Activated B cell treated with CpG ODN at 0.5 μM for 24 hours (primary cell): ENCODE measurements at regions of chr9 and their contacts with region 1.

Region 1: DNA sequence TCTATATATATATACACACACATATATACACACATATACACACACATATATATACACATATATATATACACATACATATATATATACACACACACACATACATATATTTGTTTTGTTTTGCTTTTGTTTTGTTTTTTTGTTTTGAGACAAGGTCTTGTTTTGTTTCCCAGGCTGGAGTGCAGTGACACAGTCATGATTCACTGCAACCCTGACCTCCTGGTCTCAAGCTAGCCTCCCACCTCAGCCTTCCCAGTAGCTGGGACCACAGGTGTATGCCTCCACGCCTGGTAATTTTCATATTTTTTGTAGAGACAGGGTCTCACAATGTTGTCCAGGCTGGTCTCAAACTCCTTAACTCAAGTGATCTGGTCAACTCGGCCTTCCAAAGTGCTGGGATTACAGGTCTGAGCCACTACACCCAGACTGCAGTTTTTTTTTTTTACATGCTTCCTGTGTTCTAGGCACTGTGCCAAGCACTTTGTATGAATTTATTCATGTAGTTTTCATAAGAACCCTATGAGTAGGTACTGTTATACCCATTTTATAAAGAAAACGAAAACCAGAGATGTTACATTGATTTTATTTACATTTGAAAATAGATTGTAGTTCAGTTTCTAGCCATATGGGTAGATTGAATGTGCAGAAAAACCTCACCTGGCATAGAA is 120.7 kb downstream of the PBX3 start:
- DNase-seq: no peak
- ATAC-seq: no peak
- H3K4me3 Mint-ChIP-seq: no peak overlapping the region
- H3K27ac Mint-ChIP-seq: no peak overlapping the region
- H3K4me1 Mint-ChIP-seq: peaks cover 5% of the 10 kb centered on the region
- H3K27me3 Mint-ChIP-seq: no peaks in the 10 kb centered on the region
- CTCF ChIP-seq: no peak

Region 2: GRCh38 chr9:125746017-125746773 is 121.7 kb before region 1 on chr9:
- CTCF ChIA-PET with region 1: no interaction called
- POLR2A ChIA-PET with region 1: no interaction called
- intact Hi-C with region 1: no loop called
- DNase-seq: peak; percentile 94
- ATAC-seq: peak; percentile 82
- H3K4me3 Mint-ChIP-seq: peak overlapping the region; percentile 92
- H3K27ac Mint-ChIP-seq: peak overlapping the region; percentile 92
- H3K4me1 Mint-ChIP-seq: peaks cover 34% of the 10 kb centered on the region
- H3K27me3 Mint-ChIP-seq: peaks cover 2% of the 10 kb centered on the region
- CTCF ChIP-seq: no peak

Region 3: DNA sequence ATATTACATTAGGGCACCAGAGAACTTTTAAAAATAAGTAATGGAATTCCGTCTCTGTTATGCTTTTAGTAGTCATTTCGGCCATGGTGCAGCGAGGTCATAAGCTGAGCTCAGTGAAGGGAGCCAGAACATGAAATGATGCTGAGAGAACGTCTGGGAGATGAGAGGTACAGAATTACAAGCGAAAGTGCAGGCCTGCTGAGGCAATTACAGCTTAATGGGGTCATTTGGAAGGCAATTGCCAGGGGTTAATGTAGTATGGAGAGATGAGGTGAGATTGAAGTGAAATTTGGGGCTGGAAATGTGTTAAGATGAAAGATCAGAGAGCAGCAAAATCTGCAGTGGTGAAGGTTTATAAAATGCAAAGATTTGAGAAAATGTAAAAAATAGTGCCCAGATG is 24.2 kb before region 1 on chr9:
- CTCF ChIA-PET with region 1: no interaction called
- POLR2A ChIA-PET with region 1: interaction called, 4 read pairs
- intact Hi-C with region 1: loop called (anchors 2 kb)
- DNase-seq: no peak
- ATAC-seq: no peak
- H3K4me3 Mint-ChIP-seq: no peak overlapping the region
- H3K27ac Mint-ChIP-seq: no peak overlapping the region
- H3K4me1 Mint-ChIP-seq: peaks cover 64% of the 10 kb centered on the region
- H3K27me3 Mint-ChIP-seq: no peaks in the 10 kb centered on the region
- CTCF ChIP-seq: no peak